ENCODE measurements at regions of chr22 and their contacts with region 1.

Region 1: GRCh38 chr22:38114484-38115398 is 4.3 kb upstream of the BAIAP2L2 start:
- DNase-seq: peak; percentile 86
- ATAC-seq: peak; percentile 86
- H3K4me3 Mint-ChIP-seq: no peak overlapping the region
- H3K27ac Mint-ChIP-seq: no peak overlapping the region
- H3K4me1 Mint-ChIP-seq: peaks cover 7% of the 10 kb centered on the region
- H3K27me3 Mint-ChIP-seq: no peaks in the 10 kb centered on the region

Region 2: DNA sequence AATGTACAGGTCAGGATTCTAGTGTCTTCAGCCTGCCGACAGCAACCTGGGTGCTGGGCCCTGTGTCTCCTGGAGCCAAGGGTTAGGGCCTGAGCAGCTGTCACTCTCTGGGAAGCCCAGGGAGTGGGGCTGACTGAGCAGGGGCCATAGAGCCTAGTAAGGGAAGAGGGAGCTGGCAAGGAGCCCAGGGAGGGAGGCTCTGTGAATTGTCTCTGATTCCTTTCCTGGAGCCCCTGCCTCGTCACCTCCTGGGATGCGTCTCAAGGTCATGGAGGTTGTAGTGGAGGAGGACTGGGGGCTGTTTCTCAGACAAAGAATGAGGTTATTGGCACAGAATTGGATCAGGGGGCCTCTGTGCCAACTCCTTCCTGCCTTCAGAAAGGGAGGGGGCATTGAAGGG is 142.2 kb before region 1 on chr22:
- CTCF ChIA-PET with region 1: no interaction called
- POLR2A ChIA-PET with region 1: no interaction called
- DNase-seq: no peak
- ATAC-seq: no peak
- H3K4me3 Mint-ChIP-seq: no peak overlapping the region
- H3K27ac Mint-ChIP-seq: no peak overlapping the region
- H3K4me1 Mint-ChIP-seq: no peaks in the 10 kb centered on the region
- H3K27me3 Mint-ChIP-seq: no peaks in the 10 kb centered on the region

Region 3: GRCh38 chr22:38017272-38017920 is 97.3 kb before region 1 on chr22:
- CTCF ChIA-PET with region 1: no interaction called
- POLR2A ChIA-PET with region 1: no interaction called
- DNase-seq: no peak
- ATAC-seq: no peak
- H3K4me3 Mint-ChIP-seq: no peak overlapping the region
- H3K27ac Mint-ChIP-seq: no peak overlapping the region
- H3K4me1 Mint-ChIP-seq: peaks cover 3% of the 10 kb centered on the region
- H3K27me3 Mint-ChIP-seq: no peaks in the 10 kb centered on the region

Region 4: GRCh38 chr22:38143036-38143697 is 28.4 kb after region 1 on chr22:
- CTCF ChIA-PET with region 1: interaction called, 11 read pairs
- POLR2A ChIA-PET with region 1: no interaction called
- DNase-seq: peak; percentile 71
- ATAC-seq: peak; percentile 66
- H3K4me3 Mint-ChIP-seq: peak overlapping the region; percentile 51
- H3K27ac Mint-ChIP-seq: peak overlapping the region; percentile 95
- H3K4me1 Mint-ChIP-seq: peaks cover 36% of the 10 kb centered on the region
- H3K27me3 Mint-ChIP-seq: no peaks in the 10 kb centered on the region

Region 5: DNA sequence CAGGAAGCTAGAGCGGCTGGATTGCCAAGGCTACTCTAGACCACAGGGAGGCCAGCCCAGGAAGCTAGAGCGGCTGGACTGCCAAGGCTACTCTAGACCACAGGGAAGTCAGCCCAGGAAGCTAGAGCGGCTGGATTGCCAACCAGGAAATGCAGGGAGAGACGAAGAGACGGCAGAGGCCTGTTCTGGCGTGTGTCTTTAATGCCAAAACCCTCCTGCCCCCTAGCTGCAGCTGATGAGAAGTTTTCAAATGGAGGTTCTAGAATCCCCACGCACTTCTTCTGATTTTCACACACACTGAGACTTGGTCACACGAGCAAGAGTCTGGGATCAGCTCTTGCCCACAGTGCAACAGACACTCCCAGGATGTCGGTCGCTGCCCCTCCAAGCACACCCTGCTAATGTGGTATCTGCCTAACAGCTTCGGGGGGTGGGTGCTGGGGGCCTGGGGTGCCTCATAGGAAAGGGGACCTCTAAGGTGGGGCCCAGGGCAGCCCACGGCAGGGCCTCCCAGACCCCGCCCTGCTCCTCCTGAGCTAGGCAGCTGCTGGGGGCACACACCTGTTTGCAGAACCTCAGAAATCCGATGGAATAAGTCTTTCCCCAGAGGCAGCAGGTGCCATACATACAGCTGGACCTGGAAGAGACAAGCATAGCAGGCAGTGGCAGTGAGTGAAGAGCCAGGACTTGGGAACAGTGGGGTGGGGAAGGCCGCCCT is 115.5 kb after region 1 on chr22:
- CTCF ChIA-PET with region 1: interaction called, 16 read pairs
- POLR2A ChIA-PET with region 1: interaction called, 4 read pairs
- DNase-seq: peak; percentile 56
- ATAC-seq: peak; percentile 43
- H3K4me3 Mint-ChIP-seq: no peak overlapping the region
- H3K27ac Mint-ChIP-seq: no peak overlapping the region
- H3K4me1 Mint-ChIP-seq: peaks cover 13% of the 10 kb centered on the region
- H3K27me3 Mint-ChIP-seq: no peaks in the 10 kb centered on the region

Region 6: DNA sequence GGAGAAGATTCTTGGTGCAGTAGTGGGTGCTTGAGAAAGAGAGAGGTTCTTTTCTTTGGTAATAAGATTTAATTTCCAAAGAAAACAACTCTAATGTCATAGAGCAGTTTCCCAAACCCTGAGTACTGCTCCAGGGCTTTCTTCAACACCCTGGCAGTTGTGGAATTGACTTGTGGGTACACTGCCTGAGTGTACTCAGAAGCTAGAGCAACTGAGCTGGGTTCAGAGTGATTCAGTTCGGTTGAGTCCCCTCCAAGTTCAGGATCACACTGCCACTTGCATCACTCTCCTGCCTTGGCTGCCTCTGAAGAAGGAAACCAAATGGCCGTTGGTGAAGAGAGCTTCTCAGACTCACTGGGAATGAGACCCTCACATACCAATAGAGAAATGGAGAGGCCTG is 449.9 kb after region 1 on chr22:
- CTCF ChIA-PET with region 1: no interaction called
- POLR2A ChIA-PET with region 1: no interaction called
- DNase-seq: no peak
- ATAC-seq: no peak
- H3K4me3 Mint-ChIP-seq: no peak overlapping the region
- H3K27ac Mint-ChIP-seq: no peak overlapping the region
- H3K4me1 Mint-ChIP-seq: peaks cover 4% of the 10 kb centered on the region
- H3K27me3 Mint-ChIP-seq: no peaks in the 10 kb centered on the region